ENCODE measurements at regions of chr15 and their contacts with region 1.

Region 1: DNA sequence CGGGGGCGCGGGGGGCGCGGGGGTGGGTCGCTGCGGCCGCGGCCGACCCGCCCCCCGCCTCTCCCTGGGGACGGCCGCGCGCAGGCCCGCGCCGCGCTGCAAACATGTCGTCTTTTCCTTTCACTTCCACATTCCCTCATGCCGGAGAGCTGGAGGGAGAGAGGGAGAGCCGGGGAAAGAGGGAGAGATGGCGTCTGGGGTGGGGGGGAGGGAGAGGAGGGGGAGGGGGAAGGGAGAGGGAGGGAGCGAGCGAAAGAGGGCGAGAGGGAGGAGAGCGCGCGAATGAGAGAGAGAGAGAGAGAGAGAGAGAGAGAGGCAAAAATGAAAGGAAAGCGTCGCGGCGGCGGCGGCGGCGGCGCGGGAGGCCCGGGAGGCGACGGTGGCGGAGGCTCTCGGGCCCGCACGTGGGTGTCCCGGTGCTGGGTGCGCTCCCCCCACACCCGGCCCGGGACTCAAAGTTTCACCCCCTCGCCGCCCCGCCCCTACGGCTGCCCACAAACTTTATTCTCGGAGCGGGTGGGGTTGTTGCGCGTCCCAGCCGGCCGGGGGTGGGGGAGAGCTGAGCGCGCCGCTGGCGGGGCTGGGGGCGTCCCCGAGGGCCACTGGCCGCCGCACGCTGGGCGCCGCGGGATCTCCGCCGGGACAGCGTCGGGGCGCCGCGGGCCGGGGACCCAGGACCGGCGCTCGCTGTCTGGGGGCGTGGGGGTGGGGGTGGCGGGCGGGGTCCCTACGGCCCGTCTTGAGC is 731 bp downstream of the ZNF710 start:
- DNase-seq: peak; percentile 36 to 62
- ATAC-seq: peak; percentile 45 to 52
- H3K4me3 ChIP-seq: peak overlapping the region; percentile 63 to 80 (median 66)
- H3K27ac ChIP-seq: peak overlapping the region; percentile 78 to 87 (median 82)
- H3K4me1 ChIP-seq: peaks cover 36 to 42% of the 10 kb centered on the region in 2 donors
- H3K27me3 ChIP-seq: no peaks in the 10 kb centered on the region
- CTCF ChIP-seq: no peak
- POLR2A ChIP-seq: peak; percentile 20 to 54

Region 2: DNA sequence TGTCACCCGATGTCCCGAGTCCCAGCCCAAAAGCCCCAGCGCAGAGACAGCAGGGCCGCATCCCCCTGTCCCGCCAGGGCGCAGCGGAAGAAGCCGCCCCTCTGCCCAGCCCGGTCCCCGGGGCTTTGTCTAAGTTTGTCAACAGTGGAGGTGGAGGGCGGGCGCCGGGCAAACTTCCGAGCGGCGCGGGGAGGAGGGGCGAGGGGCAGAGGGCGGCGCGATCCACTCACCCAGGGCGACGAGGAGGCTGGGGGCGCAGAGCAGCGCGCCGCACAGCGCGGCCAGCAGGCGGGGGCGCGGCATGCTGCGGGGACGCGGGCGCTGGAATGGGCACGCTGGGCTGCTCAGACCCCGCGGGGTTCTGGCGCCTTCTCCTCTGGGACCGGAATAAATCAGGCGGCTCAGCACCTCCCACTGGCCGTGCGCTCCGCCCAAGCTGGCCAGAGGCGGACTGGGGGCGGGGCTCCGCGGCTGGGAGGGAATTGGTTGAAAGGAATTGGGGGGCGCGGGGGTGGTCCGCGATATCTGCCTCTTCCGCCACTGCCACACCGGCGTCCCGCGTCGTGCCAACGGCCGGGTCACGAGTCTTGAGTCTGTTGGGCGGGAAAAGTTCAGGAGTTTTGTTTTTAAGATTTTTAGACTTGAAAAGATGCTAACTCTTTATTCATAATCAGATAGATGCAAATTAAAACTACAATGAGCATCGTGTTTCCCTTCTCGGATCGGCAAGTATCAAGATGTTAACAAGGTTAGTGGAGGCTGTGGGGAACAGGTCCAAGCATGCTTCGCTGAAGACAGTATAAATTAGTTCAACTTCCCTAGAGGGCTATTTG is 1088.6 kb before region 1 on chr15 and contains the start of gene MFGE8:
- in situ Hi-C with region 1: no loop called
- intact Hi-C with region 1: loop called (anchors 10 kb)
- DNase-seq: peak; percentile 74 to 86
- ATAC-seq: peak; percentile 58 to 60
- H3K4me3 ChIP-seq: peak within 1 kb of the TSS; percentile 70 to 92 (median 86)
- H3K27ac ChIP-seq: peak within 1 kb of the TSS; percentile 92 to 99 (median 97)
- H3K4me1 ChIP-seq: peaks cover 40 to 42% of the 10 kb centered on the region in 2 donors
- H3K27me3 ChIP-seq: no peaks in the 10 kb centered on the region
- CTCF ChIP-seq: peak in 2 of 5 experiments; percentile 25 to 35
- POLR2A ChIP-seq: peak; percentile 99
- total RNA-seq, gene MFGE8: 239 to 437 (median 395) TPM

Region 3: GRCh38 chr15:89893696-89894455 is 108.0 kb before region 1 on chr15 and contains the start of gene AP3S2:
- in situ Hi-C with region 1: no loop called
- intact Hi-C with region 1: loop called (anchors 5 kb)
- DNase-seq: peak; percentile 85 to 90
- ATAC-seq: peak; percentile 97
- H3K4me3 ChIP-seq: peak within 1 kb of the TSS; percentile 68 to 95 (median 80)
- H3K27ac ChIP-seq: peak within 1 kb of the TSS; percentile 90 to 95 (median 90)
- H3K4me1 ChIP-seq: peaks cover 10 to 16% of the 10 kb centered on the region in 2 donors
- H3K27me3 ChIP-seq: no peaks in the 10 kb centered on the region
- CTCF ChIP-seq: peak in 1 of 5 experiments; percentile 13
- POLR2A ChIP-seq: peak; percentile 68 to 75
- total RNA-seq, gene AP3S2: 48.4 to 82.6 (median 71.3) TPM

Measured in gastrocnemius medialis (tissue), 4 donors.